Naive thymus-derived CD4-positive, alpha-beta T cell (primary cell): ENCODE measurements at regions of chr2 and their contacts with region 1.

Region 1: GRCh38 chr2:230326453-230327417 is at the start of gene SP140L:
- DNase-seq: peak; percentile 48 to 83 (median 73)
- ATAC-seq: peak; percentile 99
- H3K4me3 ChIP-seq: peak within 1 kb of the TSS; percentile 86
- H3K4me3 Mint-ChIP-seq: peak within 1 kb of the TSS; percentile 90 to 100 (median 94)
- H3K27ac ChIP-seq: peak within 1 kb of the TSS; percentile 92
- H3K27ac Mint-ChIP-seq: peak within 1 kb of the TSS; percentile 95 to 99 (median 99)
- H3K4me1 ChIP-seq: peaks cover 23 to 36% of the 10 kb centered on the region in 2 donors
- H3K4me1 Mint-ChIP-seq: peaks cover 58 to 86% (median 85%) of the 10 kb centered on the region in 7 donors
- H3K27me3 ChIP-seq: no peaks in the 10 kb centered on the region
- H3K27me3 Mint-ChIP-seq: no peaks in the 10 kb centered on the region
- total RNA-seq, gene SP140L: 62.8 to 121 (median 89.5) TPM

Region 2: DNA sequence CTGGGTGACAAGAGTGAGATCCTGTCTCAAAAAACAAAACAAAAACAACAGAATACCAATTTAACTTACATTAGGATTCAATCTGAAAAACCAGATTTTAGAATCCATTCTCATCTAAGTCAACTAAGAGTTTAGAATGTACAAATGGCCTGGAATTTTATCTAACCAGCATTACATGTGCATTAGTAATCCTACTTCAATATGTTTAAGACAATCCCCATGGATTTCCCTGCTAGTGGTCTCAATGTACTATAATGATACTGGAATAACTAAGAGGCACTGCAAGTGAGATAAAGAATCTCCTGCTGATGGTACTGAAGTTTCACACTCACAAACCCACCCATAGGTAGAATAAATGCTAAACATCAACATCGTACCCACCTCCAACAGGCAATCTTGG is 558.5 kb before region 1 on chr2:
- CTCF ChIA-PET with region 1: no interaction called
- POLR2A ChIA-PET with region 1: no interaction called
- intact Hi-C with region 1: no loop called
- DNase-seq: no peak
- ATAC-seq: no peak
- H3K4me3 ChIP-seq: no peak overlapping the region
- H3K4me3 Mint-ChIP-seq: no peak overlapping the region
- H3K27ac ChIP-seq: no peak overlapping the region
- H3K27ac Mint-ChIP-seq: peak overlapping the region in 1 of 9 donors; percentile 24
- H3K4me1 ChIP-seq: no peaks in the 10 kb centered on the region
- H3K4me1 Mint-ChIP-seq: no peaks in the 10 kb centered on the region
- H3K27me3 ChIP-seq: no peaks in the 10 kb centered on the region
- H3K27me3 Mint-ChIP-seq: no peaks in the 10 kb centered on the region

Region 3: GRCh38 chr2:230358305-230358704 is 31.6 kb after region 1 on chr2:
- CTCF ChIA-PET with region 1: interaction called, 4 read pairs
- POLR2A ChIA-PET with region 1: interaction called, 10 read pairs
- intact Hi-C with region 1: loop called (anchors 2 to 5 kb)
- DNase-seq: no peak
- ATAC-seq: no peak
- H3K4me3 ChIP-seq: no peak overlapping the region
- H3K4me3 Mint-ChIP-seq: no peak overlapping the region
- H3K27ac ChIP-seq: no peak overlapping the region
- H3K27ac Mint-ChIP-seq: peak overlapping the region in 2 of 9 donors; percentile 47 to 65
- H3K4me1 ChIP-seq: peaks cover 15 to 16% of the 10 kb centered on the region in 2 donors
- H3K4me1 Mint-ChIP-seq: peaks cover 32 to 63% (median 41%) of the 10 kb centered on the region in 7 donors
- H3K27me3 ChIP-seq: no peaks in the 10 kb centered on the region
- H3K27me3 Mint-ChIP-seq: no peaks in the 10 kb centered on the region